Endothelial cell of umbilical vein (primary cell): ENCODE measurements at regions of chr7 and their contacts with region 1.

Region 1: GRCh38 chr7:140640727-140641523 is at the start of gene DENND2A:
- DNase-seq: peak; percentile 20
- H3K4me3 ChIP-seq: peak within 1 kb of the TSS in 1 of 3 experiments; percentile 34
- H3K27ac ChIP-seq: no peak within 1 kb of the TSS
- H3K4me1 ChIP-seq: peaks cover 2% of the 10 kb centered on the region
- H3K27me3 ChIP-seq: peaks cover 29 to 33% of the 10 kb centered on the region in 2 experiments
- CTCF ChIP-seq: no peak
- POLR2A ChIP-seq: no peak
- total RNA-seq, gene DENND2A: 0.33 TPM in 1 of 2 replicates, not detected in the other

Region 2: DNA sequence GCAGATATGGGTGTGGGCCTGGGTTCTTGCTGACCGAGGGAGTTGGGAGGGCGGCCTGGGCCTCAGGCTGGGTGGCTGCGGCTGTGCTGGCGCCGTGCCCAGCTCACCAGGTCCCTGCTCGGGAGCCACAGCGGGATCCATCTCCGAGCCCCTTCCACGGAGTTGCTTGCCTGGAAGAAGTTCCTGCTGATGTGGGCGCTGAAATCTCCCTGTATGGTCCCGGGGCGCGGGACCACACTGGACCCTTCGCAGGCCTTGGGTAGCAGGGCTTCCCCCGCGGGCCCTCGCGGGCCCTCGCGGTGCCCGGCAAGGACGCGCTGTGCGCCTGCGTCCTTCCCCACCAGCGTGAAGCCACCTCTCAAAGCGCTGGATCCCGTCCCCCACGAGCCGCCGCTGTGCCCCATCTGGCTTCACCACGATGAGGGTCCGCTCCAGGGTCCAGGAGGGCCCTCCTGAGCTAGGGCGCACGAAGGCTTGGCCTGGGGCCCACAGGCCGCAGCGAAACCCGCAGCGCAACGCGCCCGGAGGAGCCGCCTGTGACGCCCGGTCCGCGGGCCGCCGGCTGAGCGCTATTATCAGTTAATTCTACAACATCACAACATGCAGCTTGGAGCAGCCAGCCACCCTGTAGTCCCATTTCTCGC is 205.6 kb before region 1 on chr7:
- CTCF ChIA-PET with region 1: no interaction called
- POLR2A ChIA-PET with region 1: no interaction called
- dilution Hi-C with region 1: no loop called
- intact Hi-C with region 1: no loop called
- DNase-seq: no peak
- H3K4me3 ChIP-seq: no peak overlapping the region
- H3K27ac ChIP-seq: no peak overlapping the region
- H3K4me1 ChIP-seq: no peaks in the 10 kb centered on the region
- H3K27me3 ChIP-seq: peaks cover 0 to 2% of the 10 kb centered on the region in 2 experiments
- CTCF ChIP-seq: no peak
- POLR2A ChIP-seq: no peak

Region 3: GRCh38 chr7:140506788-140507464 is 134.0 kb before region 1 on chr7:
- CTCF ChIA-PET with region 1: no interaction called
- POLR2A ChIA-PET with region 1: interaction called, 12 read pairs
- dilution Hi-C with region 1: no loop called
- intact Hi-C with region 1: no loop called
- DNase-seq: no peak
- H3K4me3 ChIP-seq: no peak overlapping the region
- H3K27ac ChIP-seq: no peak overlapping the region
- H3K4me1 ChIP-seq: no peaks in the 10 kb centered on the region
- H3K27me3 ChIP-seq: no peaks in the 10 kb centered on the region
- CTCF ChIP-seq: no peak
- POLR2A ChIP-seq: no peak